ENCODE measurements at regions of chr1 and their contacts with region 1.

Region 1: DNA sequence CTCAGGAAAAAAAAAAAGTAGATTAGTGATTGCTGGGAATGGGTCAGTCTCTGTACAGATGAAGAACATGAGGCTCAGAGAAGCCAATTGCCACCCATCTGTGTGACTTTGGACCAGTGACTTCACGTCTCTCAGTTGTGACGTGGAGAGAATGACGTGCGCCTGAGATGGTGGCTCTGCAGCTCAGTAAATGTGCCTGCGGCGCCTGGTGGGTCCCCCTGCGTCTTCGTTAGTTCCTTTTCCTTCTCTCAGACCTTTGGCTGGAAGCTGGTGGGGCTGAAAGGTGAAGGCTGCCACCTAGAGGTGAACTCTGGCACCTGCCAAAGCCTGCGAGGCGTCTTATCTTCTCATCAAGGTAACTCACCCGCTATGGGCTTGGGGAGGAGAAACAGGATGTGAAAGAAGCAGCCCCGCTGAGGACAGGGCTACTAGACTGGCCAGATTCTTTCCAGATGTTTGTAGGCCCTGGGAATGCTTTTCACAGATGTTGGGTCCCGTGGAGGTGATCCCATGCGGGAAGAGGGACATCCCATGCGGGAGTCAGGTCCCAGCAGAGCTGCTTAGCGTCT is 8.7 kb upstream of the E2F2 start:
- DNase-seq: peak; percentile 84
- H3K4me3 ChIP-seq: no peak overlapping the region
- H3K27ac ChIP-seq: no peak overlapping the region
- H3K4me1 ChIP-seq: no peaks in the 10 kb centered on the region
- H3K27me3 ChIP-seq: no peaks in the 10 kb centered on the region
- CTCF ChIP-seq: peak; percentile 80 to 95 (median 90)
- POLR2A ChIP-seq: no peak

Region 2: GRCh38 chr1:23035823-23036452 is 503.8 kb before region 1 on chr1:
- intact Hi-C with region 1: no loop called
- DNase-seq: no peak
- H3K4me3 ChIP-seq: no peak overlapping the region
- H3K27ac ChIP-seq: no peak overlapping the region
- H3K4me1 ChIP-seq: no peaks in the 10 kb centered on the region
- H3K27me3 ChIP-seq: no peaks in the 10 kb centered on the region
- CTCF ChIP-seq: no peak
- POLR2A ChIP-seq: no peak

Region 3: GRCh38 chr1:23496490-23497181 is 43.1 kb before region 1 on chr1:
- intact Hi-C with region 1: loop called (anchors 5 kb)
- DNase-seq: no peak
- H3K4me3 ChIP-seq: no peak overlapping the region
- H3K27ac ChIP-seq: no peak overlapping the region
- H3K4me1 ChIP-seq: no peaks in the 10 kb centered on the region
- H3K27me3 ChIP-seq: no peaks in the 10 kb centered on the region
- CTCF ChIP-seq: no peak
- POLR2A ChIP-seq: no peak

Region 4: GRCh38 chr1:23524716-23525401 is 14.9 kb before region 1 on chr1:
- intact Hi-C with region 1: loop called (anchors 2 kb)
- DNase-seq: no peak
- H3K4me3 ChIP-seq: no peak overlapping the region
- H3K27ac ChIP-seq: no peak overlapping the region
- H3K4me1 ChIP-seq: no peaks in the 10 kb centered on the region
- H3K27me3 ChIP-seq: no peaks in the 10 kb centered on the region
- CTCF ChIP-seq: no peak
- POLR2A ChIP-seq: no peak

Region 5: DNA sequence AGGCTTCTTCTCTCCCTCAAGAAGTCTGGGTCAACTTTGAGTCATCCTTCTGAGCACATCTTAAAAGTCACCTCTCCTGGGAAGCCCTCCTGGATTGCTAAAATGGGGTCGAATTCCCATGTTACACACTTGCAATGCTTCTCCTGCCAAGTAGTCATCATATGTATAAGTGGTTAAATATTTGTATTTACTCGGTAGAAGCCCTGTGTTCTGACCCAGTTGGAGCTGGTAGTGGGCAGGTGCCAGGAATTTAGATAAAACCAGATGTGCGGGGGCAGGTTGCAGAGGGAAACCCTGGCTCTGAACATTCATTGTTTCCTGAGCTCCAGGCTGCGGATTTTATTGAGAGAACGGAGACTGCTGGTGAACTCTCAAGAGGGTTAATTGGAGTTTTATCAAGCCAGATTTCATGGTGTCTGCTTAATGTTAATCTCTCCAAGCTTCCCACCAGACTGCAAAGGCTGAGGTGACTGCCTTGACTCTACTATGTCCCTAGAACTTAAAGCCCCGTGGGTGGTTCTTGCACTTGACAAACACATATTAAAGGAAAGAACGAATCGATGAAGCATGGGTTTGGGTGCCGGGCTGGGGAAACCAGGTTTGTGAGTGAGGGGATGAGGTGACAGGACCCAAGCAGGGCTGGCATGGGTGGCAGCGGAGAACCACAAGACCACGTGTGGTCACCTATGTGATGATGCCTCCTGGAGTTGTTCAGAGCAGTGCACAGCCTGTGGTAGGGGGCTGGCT is 99.2 kb after region 1 on chr1:
- intact Hi-C with region 1: loop called (anchors 2 kb)
- DNase-seq: peak; percentile 55 to 59
- H3K4me3 ChIP-seq: no peak overlapping the region
- H3K27ac ChIP-seq: peak overlapping the region; percentile 22 to 59
- H3K4me1 ChIP-seq: no peaks in the 10 kb centered on the region
- H3K27me3 ChIP-seq: no peaks in the 10 kb centered on the region
- CTCF ChIP-seq: no peak
- POLR2A ChIP-seq: no peak